ENCODE measurements at regions of chr14 and their contacts with region 1.

Region 1: DNA sequence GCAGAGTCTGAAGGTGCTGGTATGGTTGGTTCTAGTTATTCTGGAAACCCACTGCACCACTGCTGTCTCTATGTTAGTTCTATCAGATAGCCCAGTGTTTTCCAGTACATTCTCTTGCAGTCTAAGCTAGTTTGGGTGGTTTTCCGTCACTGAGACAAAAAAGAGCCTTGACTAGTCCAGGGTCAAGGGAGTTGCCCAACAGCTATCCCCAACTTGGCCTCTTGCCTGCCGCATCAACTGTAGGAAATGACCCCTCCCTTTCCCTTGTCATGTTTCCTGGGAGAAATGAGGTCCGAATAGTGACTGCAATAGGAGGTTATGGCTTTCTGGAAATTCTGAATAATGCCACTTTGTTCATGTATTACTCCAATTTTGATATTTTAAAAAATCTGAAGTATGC is 160.4 kb downstream of the EFCAB11 start:
- DNase-seq: peak; percentile 80 to 93
- H3K4me3 ChIP-seq: no peak overlapping the region
- CTCF ChIP-seq: no peak
- POLR2A ChIP-seq: no peak

Region 2: GRCh38 chr14:89858089-89858488 is 64.0 kb after region 1 on chr14:
- intact Hi-C with region 1: loop called (anchors 2 kb)
- DNase-seq: no peak
- H3K4me3 ChIP-seq: no peak overlapping the region
- CTCF ChIP-seq: no peak
- POLR2A ChIP-seq: no peak

Measured in lower leg skin (tissue), 4 donors.